Activated CD4-positive, alpha-beta memory T cell treated with anti-CD3 and anti-CD28 coated beads, Interleukin-2, amount 10 ng/mL, durations not matched to agents 7 days and 5 days (primary cell): ENCODE measurements at regions of chr2 and their contacts with region 1.

Region 1: GRCh38 chr2:111883661-111884591 is at the start of gene ANAPC1:
- DNase-seq: peak; percentile 88
- H3K4me3 Mint-ChIP-seq: peak within 1 kb of the TSS; percentile 83
- H3K27ac Mint-ChIP-seq: peak within 1 kb of the TSS; percentile 81
- H3K4me1 Mint-ChIP-seq: peaks cover 31% of the 10 kb centered on the region
- H3K27me3 Mint-ChIP-seq: no peaks in the 10 kb centered on the region
- total RNA-seq, gene ANAPC1: 52.1 to 52.5 TPM

Region 2: DNA sequence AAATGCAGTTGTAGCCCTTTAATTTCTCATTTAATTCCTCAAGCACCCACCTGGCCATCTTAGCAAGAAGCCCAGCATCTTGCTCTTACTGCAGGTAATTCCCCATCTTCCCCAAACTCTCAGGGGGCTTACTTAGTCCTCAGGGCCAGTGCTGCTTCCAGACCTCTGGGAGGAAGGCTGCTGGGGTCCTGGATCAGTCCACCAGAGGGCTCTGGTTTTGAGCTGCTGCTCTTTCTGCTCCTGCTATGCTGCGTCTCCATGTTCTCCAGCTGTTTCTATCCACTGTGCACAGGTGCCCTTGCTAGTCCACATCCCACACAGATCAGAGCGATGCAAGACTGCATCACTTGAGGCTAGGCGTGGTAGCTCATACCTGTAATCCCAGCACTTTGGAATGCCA is 136.6 kb after region 1 on chr2:
- CTCF ChIA-PET with region 1: no interaction called
- POLR2A ChIA-PET with region 1: no interaction called
- DNase-seq: no peak
- H3K4me3 Mint-ChIP-seq: no peak overlapping the region
- H3K27ac Mint-ChIP-seq: no peak overlapping the region
- H3K4me1 Mint-ChIP-seq: peaks cover 2% of the 10 kb centered on the region
- H3K27me3 Mint-ChIP-seq: peaks cover 29% of the 10 kb centered on the region

Region 3: GRCh38 chr2:112048887-112049286 is 165.0 kb after region 1 on chr2:
- CTCF ChIA-PET with region 1: interaction called, 30 read pairs
- POLR2A ChIA-PET with region 1: no interaction called
- DNase-seq: no peak
- H3K4me3 Mint-ChIP-seq: no peak overlapping the region
- H3K27ac Mint-ChIP-seq: no peak overlapping the region
- H3K4me1 Mint-ChIP-seq: peaks cover 15% of the 10 kb centered on the region
- H3K27me3 Mint-ChIP-seq: peaks cover 18% of the 10 kb centered on the region

Region 4: GRCh38 chr2:112054847-112055729 is 171.2 kb after region 1 on chr2 and contains the start of gene TMEM87B:
- CTCF ChIA-PET with region 1: interaction called, 22 read pairs
- POLR2A ChIA-PET with region 1: interaction called, 13 read pairs
- DNase-seq: peak; percentile 98
- H3K4me3 Mint-ChIP-seq: peak within 1 kb of the TSS; percentile 95
- H3K27ac Mint-ChIP-seq: peak within 1 kb of the TSS; percentile 98
- H3K4me1 Mint-ChIP-seq: peaks cover 41% of the 10 kb centered on the region
- H3K27me3 Mint-ChIP-seq: peaks cover 1% of the 10 kb centered on the region
- total RNA-seq, gene TMEM87B: 23.8 to 24.0 TPM